BJ (cell line): ENCODE measurements at regions of chr17 and their contacts with region 1.

Region 1: GRCh38 chr17:49694847-49695683 is 12.7 kb downstream of the SLC35B1 start:
- DNase-seq: no peak
- H3K4me3 ChIP-seq: no peak overlapping the region
- H3K27me3 ChIP-seq: no peaks in the 10 kb centered on the region
- CTCF ChIP-seq: peak; percentile 90

Region 2: GRCh38 chr17:49603720-49604119 is 91.3 kb before region 1 on chr17:
- CTCF ChIA-PET with region 1: interaction called, 12 read pairs
- POLR2A ChIA-PET with region 1: no interaction called
- DNase-seq: no peak
- H3K4me3 ChIP-seq: no peak overlapping the region
- H3K27me3 ChIP-seq: no peaks in the 10 kb centered on the region
- CTCF ChIP-seq: no peak

Region 3: DNA sequence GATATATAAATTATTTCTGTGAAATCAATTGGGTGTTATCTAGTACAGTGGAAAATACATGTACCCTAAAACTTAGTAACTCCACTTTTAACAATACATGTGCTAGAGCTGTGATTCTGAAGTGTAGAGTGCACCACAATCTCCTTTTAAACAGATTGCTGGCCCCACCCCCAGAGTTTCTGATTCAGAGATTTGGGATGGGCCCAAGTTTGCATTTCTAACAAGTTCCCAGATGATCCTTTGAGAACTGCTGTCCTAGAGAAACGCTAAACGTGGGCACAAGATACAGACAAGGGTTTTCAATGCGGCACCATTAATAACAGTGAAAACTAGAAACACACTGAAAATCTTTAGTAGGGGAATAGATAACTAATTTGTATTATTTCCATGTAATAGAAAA is 70.2 kb before region 1 on chr17:
- CTCF ChIA-PET with region 1: no interaction called
- POLR2A ChIA-PET with region 1: no interaction called
- DNase-seq: no peak
- H3K4me3 ChIP-seq: no peak overlapping the region
- H3K27me3 ChIP-seq: no peaks in the 10 kb centered on the region
- CTCF ChIP-seq: no peak

Region 4: GRCh38 chr17:49656247-49656646 is 38.8 kb before region 1 on chr17:
- CTCF ChIA-PET with region 1: no interaction called
- POLR2A ChIA-PET with region 1: no interaction called
- DNase-seq: no peak
- H3K4me3 ChIP-seq: no peak overlapping the region
- H3K27me3 ChIP-seq: no peaks in the 10 kb centered on the region
- CTCF ChIP-seq: no peak

Region 5: DNA sequence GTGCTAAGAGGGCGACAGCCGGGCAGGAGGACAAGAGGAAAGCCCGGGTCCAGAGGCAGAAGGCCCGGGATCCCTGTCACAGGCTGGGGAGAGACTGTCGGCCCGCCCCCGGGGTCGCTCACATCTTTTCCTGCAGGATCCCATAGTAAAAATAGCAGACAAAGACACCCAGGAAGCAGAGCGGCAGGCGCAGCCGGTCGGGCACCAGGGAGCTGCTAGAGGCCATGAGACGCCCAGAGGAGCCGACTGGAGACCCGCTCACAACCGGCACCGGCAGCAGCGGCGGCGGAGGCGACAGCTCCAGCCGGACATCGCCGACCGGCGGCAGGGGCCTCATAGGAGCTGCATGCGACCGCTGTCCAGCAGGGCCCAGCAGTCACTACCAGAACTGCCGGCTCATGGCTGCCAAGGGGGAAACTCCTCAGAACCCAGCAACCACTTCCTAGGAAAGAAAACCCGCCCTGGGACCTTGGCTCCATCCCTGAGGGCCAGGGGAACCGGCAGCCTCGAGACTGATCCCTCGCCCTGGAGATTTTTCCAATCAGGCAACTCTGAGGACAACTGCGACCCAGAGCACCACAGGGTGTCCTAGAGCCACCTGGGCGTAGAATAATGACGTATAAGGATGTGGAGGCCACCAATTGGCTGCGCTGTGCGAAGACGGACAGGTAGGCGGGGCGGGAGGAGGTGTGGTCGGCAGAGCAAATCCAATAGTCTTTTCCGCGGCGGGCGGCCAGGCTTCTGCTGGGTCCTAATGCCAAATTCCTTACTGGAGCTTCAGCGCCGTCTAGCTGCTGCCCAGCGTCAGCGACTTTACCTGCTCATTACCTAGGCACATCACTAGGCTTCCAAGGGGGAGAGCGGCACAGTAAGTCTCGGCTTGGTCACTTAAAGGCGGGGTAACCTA is 12.8 kb after region 1 on chr17 and contains the start of gene SLC35B1:
- CTCF ChIA-PET with region 1: interaction called, 21 read pairs
- POLR2A ChIA-PET with region 1: interaction called, 3 read pairs
- DNase-seq: peak; percentile 98
- H3K4me3 ChIP-seq: peak within 1 kb of the TSS; percentile 92
- H3K27me3 ChIP-seq: no peaks in the 10 kb centered on the region
- CTCF ChIP-seq: peak; percentile 95
- polyA plus RNA-seq, gene SLC35B1: 116 and 120 TPM in 2 replicates

Region 6: GRCh38 chr17:49779739-49780231 is 84.7 kb after region 1 on chr17:
- CTCF ChIA-PET with region 1: interaction called, 3 read pairs
- POLR2A ChIA-PET with region 1: interaction called, 10 read pairs
- DNase-seq: peak; percentile 68
- H3K4me3 ChIP-seq: no peak overlapping the region
- H3K27me3 ChIP-seq: 0 out of 2 replicates have a peak, but pooled peaks cover 1% of the 10 kb centered on the region
- CTCF ChIP-seq: peak; percentile 68

Region 7: DNA sequence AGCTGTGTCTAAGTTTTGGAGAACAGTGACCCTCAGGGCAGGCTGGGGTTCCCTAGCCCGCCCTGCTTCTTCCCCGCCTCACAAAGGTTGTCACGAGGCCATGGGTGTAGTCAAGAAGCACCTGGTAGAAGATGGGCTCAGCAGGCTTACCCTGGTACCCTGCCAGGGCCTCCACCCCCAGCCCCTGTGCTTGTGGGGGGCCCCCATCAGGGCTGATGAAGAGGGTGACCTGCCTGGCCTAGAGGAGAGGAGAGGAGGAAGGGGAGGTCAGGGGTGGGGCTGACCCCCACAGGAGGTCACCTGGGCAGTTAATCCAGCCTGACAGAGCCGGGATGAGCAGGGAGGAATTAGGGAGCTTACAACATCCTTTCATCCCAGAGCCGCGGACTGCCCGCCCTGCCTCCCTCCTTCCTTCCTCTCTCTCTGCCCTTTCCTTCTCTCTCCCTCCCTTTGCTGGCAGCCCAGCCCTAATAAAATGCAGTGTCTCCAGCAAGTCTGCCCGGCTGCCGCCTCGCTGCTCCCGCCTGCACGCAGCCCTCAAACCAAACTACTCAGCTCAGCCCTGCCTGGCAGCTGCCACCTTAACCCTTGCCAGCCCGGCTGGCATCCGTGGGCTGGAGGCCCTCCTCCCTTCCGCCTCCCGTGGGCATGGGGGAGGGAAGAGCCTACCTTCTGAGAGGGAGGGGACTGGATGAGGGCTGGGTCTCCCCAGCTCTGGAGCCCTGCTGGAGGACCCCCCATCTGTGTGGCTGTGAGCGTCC is 292.8 kb after region 1 on chr17:
- CTCF ChIA-PET with region 1: no interaction called
- POLR2A ChIA-PET with region 1: no interaction called
- DNase-seq: no peak
- H3K4me3 ChIP-seq: no peak overlapping the region
- H3K27me3 ChIP-seq: peaks cover 18% of the 10 kb centered on the region
- CTCF ChIP-seq: no peak